ENCODE measurements at regions of chr18 and their contacts with region 1.

Region 1: DNA sequence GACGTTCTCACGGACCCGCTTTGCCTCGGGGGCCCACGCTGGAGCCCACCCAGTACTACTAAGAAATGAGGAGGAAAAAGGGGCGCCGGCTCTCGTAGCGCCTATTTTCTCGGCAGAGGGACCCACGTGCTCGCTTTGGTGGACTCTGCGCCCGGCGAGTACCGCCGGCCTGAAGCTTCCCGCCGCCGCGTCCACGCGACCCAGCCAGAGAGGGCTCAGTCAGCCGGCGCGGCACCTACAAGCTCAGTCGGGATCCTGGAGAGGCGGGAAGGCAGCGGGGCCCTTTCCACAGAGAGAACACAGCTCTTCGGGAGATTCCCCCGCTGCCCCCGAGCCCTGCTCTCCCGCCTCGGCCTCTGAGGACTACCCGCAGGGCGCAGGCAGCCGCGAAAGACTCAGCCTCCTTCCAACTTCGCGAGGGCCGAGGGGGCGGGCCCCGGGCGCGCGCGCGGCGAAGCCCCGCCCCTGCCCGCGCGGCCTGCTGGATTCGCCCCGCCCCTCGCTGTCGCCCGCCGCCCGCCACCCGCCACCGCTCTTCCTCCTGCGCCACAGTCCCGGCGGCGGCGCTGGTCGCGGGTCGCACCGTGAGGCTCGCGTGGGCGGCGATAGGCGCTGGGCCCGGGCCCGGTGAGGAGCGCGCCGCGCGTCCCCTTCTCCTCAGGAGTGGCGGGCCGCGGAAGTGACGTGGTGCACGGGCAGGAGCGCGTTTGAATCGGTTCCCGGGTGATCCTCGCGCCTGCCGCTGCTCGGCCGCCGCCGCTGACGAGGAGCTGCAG is at the start of gene SMCHD1:
- DNase-seq: peak; percentile 90
- ATAC-seq: peak; percentile 79
- H3K4me3 Mint-ChIP-seq: peak within 1 kb of the TSS; percentile 94
- H3K27ac Mint-ChIP-seq: peak within 1 kb of the TSS; percentile 96
- H3K4me1 Mint-ChIP-seq: peaks cover 31% of the 10 kb centered on the region
- H3K27me3 Mint-ChIP-seq: no peaks in the 10 kb centered on the region
- total RNA-seq, gene SMCHD1: 129 to 174 TPM

Region 2: GRCh38 chr18:2471523-2471922 is 183.8 kb before region 1 on chr18:
- CTCF ChIA-PET with region 1: no interaction called
- DNase-seq: no peak
- ATAC-seq: no peak
- H3K4me3 Mint-ChIP-seq: no peak overlapping the region
- H3K27ac Mint-ChIP-seq: no peak overlapping the region
- H3K4me1 Mint-ChIP-seq: no peaks in the 10 kb centered on the region
- H3K27me3 Mint-ChIP-seq: peaks cover 9% of the 10 kb centered on the region

Region 3: GRCh38 chr18:2636126-2636631 is 19.2 kb before region 1 on chr18:
- CTCF ChIA-PET with region 1: interaction called, 28 read pairs
- DNase-seq: no peak
- ATAC-seq: no peak
- H3K4me3 Mint-ChIP-seq: peak overlapping the region; percentile 69
- H3K27ac Mint-ChIP-seq: peak overlapping the region; percentile 100
- H3K4me1 Mint-ChIP-seq: peaks cover 62% of the 10 kb centered on the region
- H3K27me3 Mint-ChIP-seq: no peaks in the 10 kb centered on the region

Region 4: GRCh38 chr18:2641638-2642037 is 13.7 kb before region 1 on chr18:
- CTCF ChIA-PET with region 1: interaction called, 28 read pairs
- DNase-seq: no peak
- ATAC-seq: peak; percentile 68
- H3K4me3 Mint-ChIP-seq: peak overlapping the region; percentile 67
- H3K27ac Mint-ChIP-seq: no peak overlapping the region
- H3K4me1 Mint-ChIP-seq: peaks cover 47% of the 10 kb centered on the region
- H3K27me3 Mint-ChIP-seq: no peaks in the 10 kb centered on the region

Region 5: DNA sequence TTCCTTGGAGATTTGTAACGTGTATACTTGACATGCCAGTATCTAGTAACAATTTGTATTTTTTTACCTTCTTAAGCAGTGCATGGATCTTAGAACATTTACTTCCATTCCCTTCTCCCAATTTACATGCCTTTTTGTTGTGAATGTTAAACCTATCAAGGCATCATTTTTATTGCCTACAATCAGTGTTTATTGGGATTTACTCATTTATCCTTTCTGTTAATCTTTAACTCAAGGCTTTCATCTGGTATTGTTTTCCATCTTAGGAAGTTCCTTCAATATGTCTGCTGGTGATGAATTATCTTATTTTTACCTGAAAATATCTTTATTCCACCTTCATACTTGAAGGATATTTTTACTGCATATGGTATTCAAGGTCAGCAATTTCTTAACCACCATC is 102.9 kb after region 1 on chr18:
- CTCF ChIA-PET with region 1: no interaction called
- DNase-seq: no peak
- ATAC-seq: no peak
- H3K4me3 Mint-ChIP-seq: no peak overlapping the region
- H3K27ac Mint-ChIP-seq: peak overlapping the region; percentile 49
- H3K4me1 Mint-ChIP-seq: peaks cover 13% of the 10 kb centered on the region
- H3K27me3 Mint-ChIP-seq: no peaks in the 10 kb centered on the region